Caco-2 (cell line): ENCODE measurements at regions of chr19 and their contacts with region 1.

Region 1: DNA sequence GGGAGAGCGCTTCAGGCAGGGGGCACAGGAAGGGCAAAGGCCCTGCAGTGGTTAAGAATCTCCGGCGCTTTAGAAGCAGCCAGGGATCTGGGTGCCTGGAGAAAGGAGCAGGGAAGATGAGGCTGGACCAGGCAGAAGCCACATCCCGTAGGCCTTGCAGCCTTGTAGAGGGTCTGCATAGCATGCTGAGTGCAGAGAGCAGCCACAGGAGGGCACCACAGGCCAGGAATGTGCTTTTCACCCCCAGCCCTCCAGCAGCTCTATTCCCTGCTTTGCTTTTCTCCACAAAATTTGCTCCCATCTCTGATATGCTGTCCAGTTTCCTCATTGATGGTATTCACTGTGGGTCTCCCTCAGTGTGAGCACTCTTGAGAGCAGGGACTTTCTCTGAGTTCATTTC is 5.7 kb downstream of the WDR62 start:
- DNase-seq: peak in 1 of 2 experiments; percentile 46
- H3K4me3 ChIP-seq: no peak overlapping the region
- H3K4me3 Mint-ChIP-seq: no peak overlapping the region
- H3K27ac Mint-ChIP-seq: no peak overlapping the region
- H3K4me1 ChIP-seq: peaks cover 22% of the 10 kb centered on the region; the same call in 1 of the 2 replicates
- H3K4me1 Mint-ChIP-seq: peaks cover 22% of the 10 kb centered on the region
- H3K27me3 ChIP-seq: no peaks in the 10 kb centered on the region
- H3K27me3 Mint-ChIP-seq: no peaks in the 10 kb centered on the region
- CTCF ChIP-seq: peak; percentile 44 to 66

Region 2: GRCh38 chr19:36086326-36086725 is 25.9 kb after region 1 on chr19:
- CTCF ChIA-PET with region 1: no interaction called
- POLR2A ChIA-PET with region 1: no interaction called
- intact Hi-C with region 1: no loop called
- DNase-seq: no peak
- H3K4me3 ChIP-seq: no peak overlapping the region
- H3K4me3 Mint-ChIP-seq: no peak overlapping the region
- H3K27ac Mint-ChIP-seq: no peak overlapping the region
- H3K4me1 ChIP-seq: no peaks in the 10 kb centered on the region
- H3K4me1 Mint-ChIP-seq: no peaks in the 10 kb centered on the region
- H3K27me3 ChIP-seq: no peaks in the 10 kb centered on the region
- H3K27me3 Mint-ChIP-seq: no peaks in the 10 kb centered on the region
- CTCF ChIP-seq: no peak

Region 3: GRCh38 chr19:36169084-36169760 is 108.8 kb after region 1 on chr19:
- CTCF ChIA-PET with region 1: no interaction called
- POLR2A ChIA-PET with region 1: no interaction called
- intact Hi-C with region 1: loop called (anchors 1 kb)
- DNase-seq: no peak
- H3K4me3 ChIP-seq: no peak overlapping the region
- H3K4me3 Mint-ChIP-seq: no peak overlapping the region
- H3K27ac Mint-ChIP-seq: no peak overlapping the region
- H3K4me1 ChIP-seq: peaks cover 4% of the 10 kb centered on the region; the same call in 1 of the 2 replicates
- H3K4me1 Mint-ChIP-seq: peaks cover 7% of the 10 kb centered on the region
- H3K27me3 ChIP-seq: no peaks in the 10 kb centered on the region
- H3K27me3 Mint-ChIP-seq: no peaks in the 10 kb centered on the region
- CTCF ChIP-seq: no peak